Heart right ventricle (tissue), 16 donors: ENCODE measurements at regions of chr9 and their contacts with region 1.

Region 1: GRCh38 chr9:20125727-20126126 is 336.9 kb upstream of the SLC24A2 start:
- DNase-seq: no peak
- ATAC-seq: no peak
- H3K4me3 ChIP-seq: no peak overlapping the region
- H3K27ac ChIP-seq: no peak overlapping the region
- H3K4me1 ChIP-seq: no peaks in the 10 kb centered on the region
- H3K27me3 ChIP-seq: no peaks in the 10 kb centered on the region
- CTCF ChIP-seq: no peak

Region 2: GRCh38 chr9:19967216-19967887 is 158.4 kb before region 1 on chr9:
- intact Hi-C with region 1: loop called in 1 of 10 experiments (anchors 10 kb)
- DNase-seq: no peak
- ATAC-seq: no peak
- H3K4me3 ChIP-seq: no peak overlapping the region
- H3K27ac ChIP-seq: no peak overlapping the region
- H3K4me1 ChIP-seq: no peaks in the 10 kb centered on the region
- H3K27me3 ChIP-seq: peaks cover 0 to 5% (median 0%) of the 10 kb centered on the region in 7 donors
- CTCF ChIP-seq: peak in 3 of 9 donors; percentile 6 to 43 (median 24)

Region 3: GRCh38 chr9:20200991-20201431 is 75.3 kb after region 1 on chr9:
- intact Hi-C with region 1: no loop called
- DNase-seq: no peak
- ATAC-seq: no peak
- H3K4me3 ChIP-seq: no peak overlapping the region
- H3K27ac ChIP-seq: no peak overlapping the region
- H3K4me1 ChIP-seq: peaks cover 0 to 10% (median 0%) of the 10 kb centered on the region in 9 donors
- H3K27me3 ChIP-seq: no peaks in the 10 kb centered on the region
- CTCF ChIP-seq: no peak